IMR-90 (cell line): ENCODE measurements at regions of chr5 and their contacts with region 1.

Region 1: GRCh38 chr5:177311723-177312648 is at the start of gene MXD3:
- DNase-seq: peak; percentile 90
- ATAC-seq: peak; percentile 92
- H3K4me3 ChIP-seq: peak within 1 kb of the TSS; percentile 44
- H3K27ac ChIP-seq: peak within 1 kb of the TSS; percentile 52; the same call in 1 of the 2 replicates
- H3K4me1 ChIP-seq: peaks cover 7% of the 10 kb centered on the region; the same call in 1 of the 2 replicates
- H3K27me3 ChIP-seq: no peaks in the 10 kb centered on the region
- CTCF ChIP-seq: no peak
- POLR2A ChIP-seq: no peak
- RAD21 ChIP-seq: no peak
- total RNA-seq, gene MXD3: 5.6 and 7.3 TPM in 2 replicates

Region 2: GRCh38 chr5:177446200-177447065 is 134.4 kb after region 1 on chr5 and contains the start of gene PRR7:
- CTCF ChIA-PET with region 1: no interaction called
- POLR2A ChIA-PET with region 1: no interaction called
- dilution Hi-C with region 1: no loop called
- in situ Hi-C with region 1: loop called (anchors 5 kb)
- intact Hi-C with region 1: no loop called
- DNase-seq: peak; percentile 64
- ATAC-seq: peak; percentile 77
- H3K4me3 ChIP-seq: peak within 1 kb of the TSS; percentile 92
- H3K27ac ChIP-seq: peak within 1 kb of the TSS; percentile 73; the same call in 1 of the 2 replicates
- H3K4me1 ChIP-seq: peaks cover 10% of the 10 kb centered on the region
- H3K27me3 ChIP-seq: no peaks in the 10 kb centered on the region
- CTCF ChIP-seq: 0 out of 2 replicates have a peak, but pooled peaks have one; percentile 9
- POLR2A ChIP-seq: no peak
- RAD21 ChIP-seq: no peak
- total RNA-seq, gene PRR7: 1.1 TPM in 2 replicates

Region 3: GRCh38 chr5:177454397-177455035 is 142.5 kb after region 1 on chr5:
- CTCF ChIA-PET with region 1: no interaction called
- POLR2A ChIA-PET with region 1: no interaction called
- dilution Hi-C with region 1: no loop called
- in situ Hi-C with region 1: loop called (anchors 5 kb)
- intact Hi-C with region 1: loop called (anchors 2 kb)
- DNase-seq: peak; percentile 80
- ATAC-seq: peak; percentile 58
- H3K4me3 ChIP-seq: peak overlapping the region; percentile 38
- H3K27ac ChIP-seq: no peak overlapping the region; the same call in 1 of the 2 replicates
- H3K4me1 ChIP-seq: peaks cover 8% of the 10 kb centered on the region
- H3K27me3 ChIP-seq: no peaks in the 10 kb centered on the region
- CTCF ChIP-seq: peak; percentile 99
- POLR2A ChIP-seq: 0 out of 2 replicates have a peak, but pooled peaks have one; percentile 24
- RAD21 ChIP-seq: peak; percentile 88